ENCODE measurements at regions of chr9 and their contacts with region 1.

Region 1: DNA sequence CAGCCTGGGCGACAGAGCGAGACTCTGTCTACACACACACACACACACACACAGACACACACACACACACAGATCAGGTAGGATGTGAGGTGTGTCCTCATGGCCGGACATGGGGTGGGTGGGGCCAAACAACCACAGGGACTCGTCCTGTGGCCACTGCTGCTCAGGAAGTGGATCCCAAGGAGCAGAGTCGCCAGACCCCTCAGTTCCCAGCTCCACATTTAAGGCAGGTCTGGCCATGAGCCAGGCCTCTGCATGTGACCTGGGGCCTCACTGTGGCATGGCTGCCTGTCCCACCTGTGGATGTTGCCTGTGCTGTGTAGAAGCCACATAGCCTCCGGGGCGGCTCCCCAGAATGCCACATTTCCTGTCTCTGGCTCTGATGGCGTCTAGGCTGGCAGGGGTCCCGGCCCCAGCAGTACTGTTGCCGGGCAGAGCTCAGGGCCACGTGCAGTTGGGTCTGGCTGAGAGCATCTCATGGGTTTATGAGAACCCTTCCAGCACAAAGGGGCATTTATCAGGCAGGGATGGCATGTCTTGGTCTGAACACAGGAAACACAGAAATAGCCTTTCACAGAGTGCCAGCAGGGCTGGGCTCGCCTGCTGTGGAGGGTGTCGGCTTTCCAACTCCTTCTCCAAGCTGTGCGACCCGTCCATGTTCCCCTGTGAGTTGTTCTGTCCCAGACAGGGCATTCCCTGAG is 9.9 kb upstream of the NINJ1 start:
- DNase-seq: peak; percentile 71
- ATAC-seq: peak; percentile 88
- H3K4me3 Mint-ChIP-seq: no peak overlapping the region
- H3K27ac Mint-ChIP-seq: peak overlapping the region; percentile 84
- H3K4me1 Mint-ChIP-seq: peaks cover 40% of the 10 kb centered on the region
- H3K27me3 Mint-ChIP-seq: no peaks in the 10 kb centered on the region

Region 2: DNA sequence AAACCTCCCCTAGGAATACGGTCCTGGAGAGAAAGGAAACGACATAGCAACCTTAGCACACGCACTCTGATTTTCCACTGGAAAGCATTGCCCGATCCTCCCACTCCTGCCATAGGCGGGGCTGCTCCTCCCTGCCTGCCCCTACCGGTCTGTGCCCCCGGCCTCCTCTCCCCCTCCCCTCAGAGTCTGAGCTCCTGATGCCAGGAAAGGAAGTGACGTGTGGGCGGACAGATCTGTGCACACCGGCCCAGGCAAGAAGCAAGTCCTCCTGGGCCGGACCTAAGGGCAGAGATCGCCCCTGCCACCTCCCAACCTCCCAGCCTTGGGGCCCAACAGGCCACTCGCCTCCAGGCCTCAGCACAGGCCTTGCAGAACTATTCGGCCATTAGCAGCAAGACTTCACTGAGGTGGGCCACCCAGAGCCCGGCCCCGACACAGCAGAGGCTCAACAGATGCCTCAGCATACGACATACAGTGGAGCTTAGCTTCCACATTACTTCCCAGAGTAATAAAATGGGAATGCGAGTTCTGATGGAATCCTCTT is 17.1 kb before region 1 on chr9:
- CTCF ChIA-PET with region 1: interaction called, 10 read pairs
- DNase-seq: no peak
- ATAC-seq: no peak
- H3K4me3 Mint-ChIP-seq: no peak overlapping the region
- H3K27ac Mint-ChIP-seq: peak overlapping the region; percentile 90
- H3K4me1 Mint-ChIP-seq: peaks cover 58% of the 10 kb centered on the region
- H3K27me3 Mint-ChIP-seq: no peaks in the 10 kb centered on the region

Region 3: GRCh38 chr9:93154315-93154903 is 10.4 kb after region 1 on chr9:
- CTCF ChIA-PET with region 1: interaction called, 10 read pairs
- DNase-seq: peak; percentile 61
- ATAC-seq: no peak
- H3K4me3 Mint-ChIP-seq: no peak overlapping the region
- H3K27ac Mint-ChIP-seq: no peak overlapping the region
- H3K4me1 Mint-ChIP-seq: peaks cover 28% of the 10 kb centered on the region
- H3K27me3 Mint-ChIP-seq: no peaks in the 10 kb centered on the region